ENCODE measurements at regions of chr12 and their contacts with region 1.

Region 1: DNA sequence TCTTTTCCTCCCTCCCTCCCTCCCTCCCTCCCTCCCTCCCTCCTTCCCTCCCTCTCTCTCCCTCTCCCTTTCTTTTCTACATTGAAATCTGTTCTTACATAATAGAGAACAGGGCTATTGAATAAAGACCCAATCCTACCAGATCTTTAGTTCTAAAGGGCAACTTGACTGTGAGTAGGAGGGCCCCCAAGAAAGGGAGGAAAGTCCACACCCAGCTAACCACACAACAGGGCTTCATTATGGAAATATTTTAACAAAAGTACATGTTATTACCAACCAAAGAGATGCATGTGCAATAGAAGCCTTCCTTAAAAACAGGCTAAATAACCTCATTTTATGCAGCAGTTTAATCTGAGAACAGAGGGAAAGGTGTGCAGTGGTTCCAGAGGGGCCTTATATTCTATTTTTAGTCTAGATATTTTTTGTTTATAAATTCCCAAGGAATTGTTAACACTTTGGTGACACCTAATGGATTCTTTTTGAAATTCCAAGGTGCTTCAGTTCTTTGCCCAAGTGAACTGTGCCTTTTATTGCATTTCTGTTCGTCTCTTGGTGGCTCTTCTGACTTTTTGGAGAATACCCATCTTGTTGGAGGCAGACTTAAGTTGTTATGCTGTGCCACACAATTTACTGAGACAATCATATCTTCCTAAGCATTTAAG is 63.0 kb downstream of the GNS start:
- DNase-seq: no peak

Region 2: DNA sequence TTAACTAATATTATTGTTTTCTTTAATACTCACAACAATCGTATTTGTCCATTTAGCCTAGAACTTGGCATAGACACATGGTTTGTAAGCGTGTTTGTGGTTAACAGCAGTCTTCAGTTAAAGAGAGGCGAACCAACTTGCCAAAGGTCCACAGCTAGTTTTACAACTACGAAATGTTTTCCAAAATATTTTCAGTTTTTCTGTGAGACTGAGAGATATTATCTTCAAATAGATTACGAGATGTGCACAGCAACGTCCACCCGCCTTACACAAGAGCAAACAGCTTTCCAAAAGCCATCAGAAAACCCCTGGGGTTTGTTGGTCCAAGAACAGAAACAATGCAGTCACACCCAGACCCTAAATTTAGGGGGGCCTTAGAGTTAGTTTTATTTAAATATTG is 144.5 kb before region 1 on chr12:
- intact Hi-C with region 1: loop called (anchors 2 to 5 kb)
- DNase-seq: no peak

Region 3: GRCh38 chr12:64714551-64714968 is 18.3 kb after region 1 on chr12:
- intact Hi-C with region 1: no loop called
- DNase-seq: no peak

Measured in posterior vena cava (tissue), 2 donors.